K562 (cell line): ENCODE measurements at regions of chr5 and their contacts with region 1.

Region 1: GRCh38 chr5:133868946-133869518 is 99.4 kb downstream of the C5orf15 start:
- DNase-seq: peak; percentile 71 to 77 (median 76)
- ATAC-seq: peak; percentile 90
- H3K4me3 ChIP-seq: no peak overlapping the region
- H3K27ac ChIP-seq: no peak overlapping the region
- H3K4me1 ChIP-seq: peaks cover 3 to 4% of the 10 kb centered on the region in 2 experiments; a peak in 2 of 5 replicates
- H3K27me3 ChIP-seq: peaks cover 7 to 38% of the 10 kb centered on the region in 2 experiments; a peak in 4 of 5 replicates
- CTCF ChIP-seq: peak; percentile 84 to 88 (median 86)
- EP300 ChIP-seq: no peak
- POLR2A ChIP-seq: no peak
- RAD21 ChIP-seq: peak; percentile 62 to 72

Region 2: DNA sequence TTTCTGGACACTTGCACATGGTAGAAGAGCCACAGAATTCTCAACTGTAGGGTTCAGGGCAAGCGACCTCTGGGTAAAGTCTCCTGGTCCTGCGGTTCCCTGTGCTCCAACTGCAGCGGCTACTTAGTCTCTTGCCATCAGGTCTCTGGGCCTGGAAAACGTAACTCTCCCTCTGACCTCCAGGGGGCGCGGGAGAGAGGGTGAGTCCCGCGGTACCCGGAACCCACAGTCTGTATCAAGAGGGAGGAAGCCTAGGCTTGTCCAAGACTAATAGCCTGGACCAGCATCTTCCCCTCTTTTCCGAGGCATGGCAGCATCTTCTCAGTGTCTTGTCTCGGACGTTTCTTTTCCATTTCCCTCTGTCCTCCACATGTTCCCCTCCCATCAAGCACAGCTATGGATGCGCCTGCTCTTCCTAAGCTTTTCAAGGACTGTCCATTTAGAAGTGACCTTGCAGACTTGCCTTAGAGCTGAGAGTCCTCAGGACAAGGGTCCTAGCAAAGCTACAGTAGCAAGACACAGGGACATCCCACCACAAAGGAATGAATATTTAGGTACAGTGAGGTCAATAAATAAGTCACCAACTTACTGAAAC is 316.0 kb before region 1 on chr5:
- CTCF ChIA-PET with region 1: no interaction called
- POLR2A ChIA-PET with region 1: no interaction called
- in situ Hi-C with region 1: no loop called
- intact Hi-C with region 1: loop called (anchors 5 kb)
- DNase-seq: peak; percentile 63 to 78 (median 72)
- ATAC-seq: peak; percentile 98
- H3K4me3 ChIP-seq: no peak overlapping the region
- H3K27ac ChIP-seq: no peak overlapping the region
- H3K4me1 ChIP-seq: no peaks in the 10 kb centered on the region
- H3K27me3 ChIP-seq: peaks cover 5 to 15% of the 10 kb centered on the region in 2 experiments; a peak in 3 of 5 replicates
- CTCF ChIP-seq: peak; percentile 74 to 88 (median 79)
- EP300 ChIP-seq: no peak
- POLR2A ChIP-seq: no peak
- RAD21 ChIP-seq: peak; percentile 26 to 57

Region 3: GRCh38 chr5:133754575-133755169 is 114.4 kb before region 1 on chr5:
- CTCF ChIA-PET with region 1: interaction called, 6 read pairs
- POLR2A ChIA-PET with region 1: no interaction called
- in situ Hi-C with region 1: no loop called
- intact Hi-C with region 1: loop called (anchors 10 kb)
- DNase-seq: peak; percentile 30 to 48 (median 38)
- ATAC-seq: peak; percentile 95
- H3K4me3 ChIP-seq: no peak overlapping the region
- H3K27ac ChIP-seq: no peak overlapping the region
- H3K4me1 ChIP-seq: no peaks in the 10 kb centered on the region
- H3K27me3 ChIP-seq: peaks cover 0 to 6% of the 10 kb centered on the region in 2 experiments; a peak in 3 of 5 replicates
- CTCF ChIP-seq: peak; percentile 66 to 77 (median 72)
- EP300 ChIP-seq: no peak
- POLR2A ChIP-seq: no peak
- RAD21 ChIP-seq: peak; percentile 31 to 59; a peak in 3 of 4 replicates

Region 4: DNA sequence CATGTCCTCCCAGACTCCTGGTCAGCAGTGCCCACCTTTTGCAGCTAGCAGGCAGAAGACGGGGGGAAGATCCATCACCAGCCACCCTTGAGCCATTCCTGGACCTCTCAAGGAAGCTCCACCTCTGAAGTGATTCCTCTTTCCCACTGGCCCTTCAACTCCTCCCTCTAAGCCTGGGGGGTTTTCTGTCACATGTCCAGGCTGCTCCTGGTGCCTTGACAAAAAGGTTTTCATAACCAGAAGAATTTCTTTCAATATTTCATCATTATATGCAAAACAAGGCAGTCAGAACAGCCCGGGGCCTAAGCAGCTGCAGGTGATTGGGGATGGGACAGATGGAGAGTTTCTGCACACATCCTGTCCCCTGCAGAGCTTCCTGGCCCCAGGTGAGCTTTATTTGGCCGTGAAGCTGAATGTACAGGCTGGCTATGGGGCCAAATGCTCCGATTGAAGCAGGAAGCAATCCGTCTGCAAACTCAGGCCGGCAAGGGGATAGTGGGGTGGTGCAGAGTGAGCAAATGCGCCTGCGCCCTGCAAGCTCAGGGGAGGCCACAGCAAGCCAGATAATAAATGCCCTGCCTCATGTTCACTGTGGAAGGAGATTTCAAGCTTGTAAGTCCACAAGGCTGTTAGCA is 74.1 kb before region 1 on chr5:
- CTCF ChIA-PET with region 1: no interaction called
- POLR2A ChIA-PET with region 1: no interaction called
- in situ Hi-C with region 1: no loop called
- intact Hi-C with region 1: no loop called
- DNase-seq: no peak
- ATAC-seq: no peak
- H3K4me3 ChIP-seq: no peak overlapping the region
- H3K27ac ChIP-seq: no peak overlapping the region
- H3K4me1 ChIP-seq: no peaks in the 10 kb centered on the region
- H3K27me3 ChIP-seq: peaks cover 7 to 43% of the 10 kb centered on the region in 2 experiments; a peak in 4 of 5 replicates
- CTCF ChIP-seq: no peak
- EP300 ChIP-seq: no peak
- POLR2A ChIP-seq: no peak
- RAD21 ChIP-seq: no peak

Region 5: GRCh38 chr5:133930061-133930812 is 61.2 kb after region 1 on chr5:
- CTCF ChIA-PET with region 1: no interaction called
- POLR2A ChIA-PET with region 1: no interaction called
- in situ Hi-C with region 1: no loop called
- intact Hi-C with region 1: no loop called
- DNase-seq: peak; percentile 34 to 78 (median 48)
- ATAC-seq: peak; percentile 48
- H3K4me3 ChIP-seq: no peak overlapping the region
- H3K27ac ChIP-seq: peak overlapping the region; percentile 67
- H3K4me1 ChIP-seq: peaks cover 56 to 59% of the 10 kb centered on the region in 2 experiments
- H3K27me3 ChIP-seq: no peaks in the 10 kb centered on the region
- CTCF ChIP-seq: no peak
- EP300 ChIP-seq: no peak
- POLR2A ChIP-seq: peak; percentile 49
- RAD21 ChIP-seq: 0 out of 4 replicates have a peak, but pooled peaks of 1 of the 2 experiments have one; percentile 4